Esophagus muscularis mucosa (tissue), 4 donors: ENCODE measurements at regions of chr12 and their contacts with region 1.

Region 1: DNA sequence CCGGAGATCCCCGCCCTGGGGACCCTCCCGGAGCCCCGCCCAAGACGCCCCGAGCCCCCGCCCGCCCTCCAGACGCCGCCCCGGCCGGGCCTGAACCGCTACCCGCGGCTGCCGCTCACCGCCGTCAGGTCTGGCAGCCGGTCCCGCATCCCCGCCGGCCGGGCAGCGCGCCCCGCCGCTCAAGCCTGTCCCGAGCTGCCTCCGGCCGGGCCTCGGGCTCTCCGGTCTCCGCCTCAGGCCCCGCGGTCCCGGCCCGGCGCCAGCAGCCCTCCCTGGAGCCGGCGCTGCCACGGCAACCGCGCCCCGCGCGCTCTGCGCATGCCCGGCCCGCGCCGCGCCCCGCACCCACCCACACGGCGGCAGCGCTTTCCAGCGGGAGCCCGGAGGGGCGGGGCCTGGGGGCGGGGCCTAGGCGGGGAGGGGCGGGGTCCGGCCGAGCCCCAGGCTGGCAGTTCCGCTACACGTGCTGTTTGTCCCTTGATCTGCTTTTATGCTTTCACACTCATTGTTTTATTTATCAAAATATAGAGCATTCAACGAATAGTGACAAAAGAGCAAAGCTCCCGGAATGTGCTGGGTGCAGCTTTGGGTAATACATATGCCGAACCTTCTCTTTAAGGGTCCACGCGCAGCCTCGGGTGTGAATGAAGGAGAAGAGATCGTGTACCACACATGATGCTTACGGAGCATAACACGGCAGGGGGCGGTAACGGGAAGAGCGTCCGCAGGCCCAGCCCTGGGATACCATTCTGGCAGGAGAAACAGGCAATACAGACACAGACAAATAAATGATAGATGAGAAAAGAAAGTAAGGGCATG is at the start of gene STX2:
- DNase-seq: peak; percentile 94
- H3K4me3 ChIP-seq: peak within 1 kb of the TSS; percentile 75 to 99 (median 90)
- H3K27ac ChIP-seq: peak within 1 kb of the TSS; percentile 85 to 92 (median 88)
- H3K4me1 ChIP-seq: peaks cover 0 to 40% (median 36%) of the 10 kb centered on the region in 4 donors
- H3K27me3 ChIP-seq: no peaks in the 10 kb centered on the region
- CTCF ChIP-seq: peak in 2 of 3 experiments; percentile 21 to 29
- EP300 ChIP-seq: no peak
- POLR2A ChIP-seq: no peak
- total RNA-seq, gene STX2: 46.6 to 80.8 (median 49.1) TPM

Region 2: GRCh38 chr12:129579879-129580278 is 1259.3 kb before region 1 on chr12:
- intact Hi-C with region 1: no loop called
- DNase-seq: no peak
- H3K4me3 ChIP-seq: no peak overlapping the region
- H3K27ac ChIP-seq: no peak overlapping the region
- H3K4me1 ChIP-seq: no peaks in the 10 kb centered on the region
- H3K27me3 ChIP-seq: no peaks in the 10 kb centered on the region
- CTCF ChIP-seq: no peak
- EP300 ChIP-seq: no peak
- POLR2A ChIP-seq: no peak

Region 3: DNA sequence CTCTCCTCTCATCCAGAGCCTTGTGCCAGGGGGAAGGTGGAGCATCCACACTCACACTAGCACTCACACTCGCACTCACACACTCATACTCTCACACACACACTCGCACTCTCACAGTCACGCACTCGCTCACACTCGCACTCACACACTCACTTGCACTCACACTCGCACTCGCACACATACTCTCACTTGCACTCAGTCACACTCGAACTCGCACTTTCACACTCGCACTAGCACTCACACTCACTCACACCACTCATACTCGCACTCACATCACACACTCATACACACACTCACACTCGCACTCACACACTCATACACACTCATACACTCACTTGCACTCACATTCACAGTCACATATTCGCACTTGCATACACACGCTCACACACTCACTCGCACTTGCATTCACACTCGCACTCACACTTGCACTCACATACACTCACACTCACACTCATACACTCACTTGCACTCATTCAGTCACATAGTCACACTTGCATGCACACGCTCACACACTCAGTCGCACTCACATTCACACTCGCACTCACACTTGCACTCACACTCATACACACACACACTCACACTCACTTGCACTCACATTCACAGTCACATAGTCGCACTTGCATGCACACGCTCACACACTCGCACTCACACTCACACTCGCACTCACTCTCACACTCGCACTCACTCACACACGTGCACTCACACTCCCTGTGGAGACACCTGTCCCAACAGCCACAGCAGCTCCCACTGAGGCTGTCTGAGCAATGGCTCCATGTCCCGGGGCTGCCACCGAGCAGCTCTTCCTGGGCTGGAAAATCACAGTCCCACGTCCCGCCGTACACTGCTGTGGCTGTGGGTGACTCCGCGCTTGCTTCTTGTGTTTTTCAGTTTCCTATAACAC is 110.8 kb before region 1 on chr12:
- intact Hi-C with region 1: no loop called
- DNase-seq: no peak
- H3K4me3 ChIP-seq: no peak overlapping the region
- H3K27ac ChIP-seq: no peak overlapping the region
- H3K4me1 ChIP-seq: no peaks in the 10 kb centered on the region
- H3K27me3 ChIP-seq: peaks cover 0 to 34% (median 0%) of the 10 kb centered on the region in 4 donors
- CTCF ChIP-seq: no peak
- EP300 ChIP-seq: no peak
- POLR2A ChIP-seq: no peak

Region 4: DNA sequence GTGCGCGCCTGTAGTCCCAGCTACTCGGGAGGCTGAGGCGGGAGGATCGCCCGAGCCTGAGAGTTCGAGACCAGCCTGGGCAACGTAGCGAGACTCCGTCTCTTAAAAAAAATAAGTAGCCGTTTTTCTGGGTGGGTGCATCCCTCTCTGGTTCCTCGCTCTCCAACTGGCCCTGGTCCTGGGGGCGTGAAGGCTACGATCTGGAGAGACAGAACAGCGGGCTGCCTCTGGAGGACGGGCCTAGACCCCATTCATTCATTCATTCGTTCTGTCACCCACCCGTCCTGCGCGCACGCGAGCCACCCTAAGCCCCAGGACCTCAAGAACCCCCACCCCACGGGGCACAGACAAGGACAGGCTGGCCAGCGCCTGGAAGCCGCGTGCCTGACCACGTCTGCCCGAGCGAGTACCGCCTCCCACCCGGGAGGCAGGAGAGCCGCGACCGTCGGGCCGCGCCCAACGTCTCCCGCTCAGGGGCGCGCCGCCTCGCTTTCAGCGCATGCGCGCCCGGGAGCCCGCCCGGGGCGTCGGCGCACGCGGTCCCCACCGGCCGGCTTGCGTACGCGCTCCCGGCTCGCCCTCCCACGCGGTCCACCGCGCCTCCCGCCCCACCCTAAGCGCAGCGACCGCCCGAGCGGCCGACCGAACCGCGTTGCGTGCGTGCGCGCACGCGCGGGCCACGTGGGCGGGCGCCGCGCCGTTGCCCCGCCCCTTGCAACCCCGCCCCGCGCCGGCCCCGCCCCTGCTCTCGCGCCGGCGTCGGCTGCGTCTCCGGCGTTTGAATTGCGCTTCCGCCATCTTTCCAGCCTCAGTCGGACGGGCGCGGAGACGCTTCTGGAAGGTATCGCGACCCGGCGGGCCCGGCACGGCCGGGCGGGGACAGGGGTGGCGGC is 32.4 kb after region 1 on chr12 and contains the start of gene RAN:
- intact Hi-C with region 1: loop called (anchors 1 kb)
- DNase-seq: peak; percentile 94
- H3K4me3 ChIP-seq: peak within 1 kb of the TSS; percentile 93 to 97 (median 94)
- H3K27ac ChIP-seq: peak within 1 kb of the TSS; percentile 89 to 97 (median 96)
- H3K4me1 ChIP-seq: peaks cover 16 to 41% (median 35%) of the 10 kb centered on the region in 4 donors
- H3K27me3 ChIP-seq: no peaks in the 10 kb centered on the region
- CTCF ChIP-seq: no peak
- EP300 ChIP-seq: no peak
- POLR2A ChIP-seq: no peak
- total RNA-seq, gene RAN: 157 to 211 (median 197) TPM